Cardiac septum (tissue), 1 donor: ENCODE measurements at regions of chr6 and their contacts with region 1.

Region 1: GRCh38 chr6:137277971-137278637 is 58.9 kb upstream of the IFNGR1 start:
- DNase-seq: no peak

Region 2: DNA sequence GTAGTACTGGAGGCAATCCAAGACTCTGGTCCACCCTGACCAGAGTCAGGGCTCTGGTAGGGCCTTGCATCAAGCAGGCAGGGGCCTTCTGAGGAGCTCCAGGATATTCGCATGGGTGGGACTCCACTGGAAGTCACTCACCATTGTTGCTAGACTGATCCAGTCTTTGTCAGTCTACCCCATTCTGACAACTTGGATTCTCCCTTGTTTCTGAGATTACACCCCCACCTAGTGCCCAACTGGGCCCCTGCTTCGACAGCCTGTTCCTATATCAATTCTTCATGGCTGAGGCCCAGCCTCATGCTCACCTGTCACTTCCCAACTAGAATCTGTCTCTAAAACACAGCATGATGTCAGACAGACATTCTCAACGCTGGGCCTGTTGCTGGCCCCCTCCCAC is 350.8 kb before region 1 on chr6:
- intact Hi-C with region 1: no loop called
- DNase-seq: no peak

Region 3: GRCh38 chr6:137415127-137415833 is 137.2 kb after region 1 on chr6:
- intact Hi-C with region 1: loop called (anchors 5 kb)
- DNase-seq: no peak